ENCODE measurements at regions of chr1 and their contacts with region 1.

Region 1: GRCh38 chr1:187977298-187977697 is 1148.5 kb downstream of the PLA2G4A start:
- DNase-seq: no peak
- H3K4me3 ChIP-seq: no peak overlapping the region
- H3K27ac ChIP-seq: no peak overlapping the region
- H3K4me1 ChIP-seq: no peaks in the 10 kb centered on the region
- H3K27me3 ChIP-seq: no peaks in the 10 kb centered on the region
- CTCF ChIP-seq: no peak
- POLR2A ChIP-seq: no peak

Region 2: GRCh38 chr1:187460093-187460492 is 517.2 kb before region 1 on chr1:
- intact Hi-C with region 1: loop called (anchors 5 kb)
- DNase-seq: no peak
- H3K4me3 ChIP-seq: no peak overlapping the region
- H3K27ac ChIP-seq: no peak overlapping the region
- H3K4me1 ChIP-seq: no peaks in the 10 kb centered on the region
- H3K27me3 ChIP-seq: no peaks in the 10 kb centered on the region
- CTCF ChIP-seq: no peak
- POLR2A ChIP-seq: no peak

Region 3: DNA sequence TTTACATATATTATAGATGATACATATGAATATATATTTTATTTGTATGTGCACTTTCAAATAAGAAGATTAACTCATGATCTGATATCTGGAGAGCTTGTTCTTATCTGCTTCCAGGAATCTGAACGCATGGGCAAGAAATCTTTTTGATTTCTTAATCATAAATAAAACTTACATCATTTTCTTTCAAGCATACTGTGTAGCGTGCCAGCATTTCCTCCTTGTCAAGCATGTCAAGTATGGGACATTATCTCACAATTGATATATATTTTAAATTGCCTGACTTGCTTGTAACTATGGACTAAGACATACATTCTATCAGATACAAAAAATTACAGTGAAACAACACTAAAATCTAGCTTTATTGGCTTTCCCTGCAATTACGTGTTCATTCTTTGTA is 20.3 kb before region 1 on chr1:
- intact Hi-C with region 1: no loop called
- DNase-seq: no peak
- H3K4me3 ChIP-seq: no peak overlapping the region
- H3K27ac ChIP-seq: no peak overlapping the region
- H3K4me1 ChIP-seq: no peaks in the 10 kb centered on the region
- H3K27me3 ChIP-seq: no peaks in the 10 kb centered on the region
- CTCF ChIP-seq: no peak
- POLR2A ChIP-seq: no peak

Measured in breast epithelium (tissue), 4 donors.